ENCODE measurements at regions of chr5 and their contacts with region 1.

Region 1: DNA sequence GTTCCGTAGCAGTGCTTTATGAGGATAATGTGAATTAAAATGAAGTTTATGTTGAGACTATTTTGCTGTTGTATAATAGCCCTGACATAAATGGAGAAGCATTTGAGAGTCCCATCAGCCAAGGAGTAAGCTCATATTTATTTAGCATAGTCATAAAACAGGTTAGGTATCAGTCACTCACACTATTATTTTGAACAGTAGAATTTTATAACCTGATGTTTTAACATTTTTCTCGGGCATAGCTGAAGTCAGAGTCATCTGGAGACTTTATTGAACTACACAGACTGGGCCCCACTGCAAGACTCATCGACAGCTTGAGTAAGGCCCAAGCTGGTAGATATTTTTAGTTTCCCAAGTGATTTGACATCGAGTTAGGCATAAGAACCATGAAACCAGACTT is 620.3 kb upstream of the WWC1 start:
- DNase-seq: no peak
- H3K4me3 ChIP-seq: no peak overlapping the region
- H3K27ac ChIP-seq: no peak overlapping the region
- H3K4me1 ChIP-seq: no peaks in the 10 kb centered on the region
- H3K27me3 ChIP-seq: no peaks in the 10 kb centered on the region
- CTCF ChIP-seq: no peak
- POLR2A ChIP-seq: no peak

Region 2: GRCh38 chr5:167143716-167144115 is 527.5 kb before region 1 on chr5:
- intact Hi-C with region 1: loop called (anchors 5 kb)
- DNase-seq: no peak
- H3K4me3 ChIP-seq: no peak overlapping the region
- H3K27ac ChIP-seq: no peak overlapping the region
- H3K4me1 ChIP-seq: no peaks in the 10 kb centered on the region
- H3K27me3 ChIP-seq: no peaks in the 10 kb centered on the region
- CTCF ChIP-seq: no peak
- POLR2A ChIP-seq: no peak

Measured in breast epithelium (tissue), 4 donors.